ENCODE measurements at regions of chr1 and their contacts with region 1.

Region 1: GRCh38 chr1:236381565-236382158 is 12.4 kb upstream of the EDARADD start:
- DNase-seq: no peak
- H3K4me3 ChIP-seq: no peak overlapping the region
- CTCF ChIP-seq: no peak

Region 2: GRCh38 chr1:236345728-236346127 is 35.9 kb before region 1 on chr1:
- in situ Hi-C with region 1: loop called (anchors 5 kb)
- DNase-seq: no peak
- H3K4me3 ChIP-seq: no peak overlapping the region
- CTCF ChIP-seq: peak; percentile 12

Region 3: DNA sequence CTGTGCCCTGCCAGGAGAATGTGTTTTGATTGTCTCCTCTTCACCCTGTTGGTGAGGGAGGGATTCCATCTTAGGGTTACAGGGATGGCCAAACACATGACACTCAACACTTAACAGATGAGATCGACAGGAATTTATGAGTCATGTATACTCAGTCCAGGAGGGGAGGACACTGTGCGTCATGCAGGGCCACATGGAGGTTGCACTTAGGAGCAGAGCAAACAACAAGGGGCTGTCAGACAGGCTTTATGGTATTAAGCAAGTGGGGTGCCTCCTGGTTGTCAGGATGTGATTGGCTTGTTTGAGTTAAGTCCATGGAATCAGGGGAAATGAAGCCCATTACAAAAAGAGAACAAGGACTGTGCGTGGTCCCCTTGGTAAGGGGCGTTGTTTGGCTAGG is 39.4 kb after region 1 on chr1:
- in situ Hi-C with region 1: no loop called
- DNase-seq: no peak
- H3K4me3 ChIP-seq: no peak overlapping the region
- CTCF ChIP-seq: no peak

Region 4: GRCh38 chr1:236433819-236434315 is 52.2 kb after region 1 on chr1:
- in situ Hi-C with region 1: no loop called
- DNase-seq: no peak
- H3K4me3 ChIP-seq: no peak overlapping the region
- CTCF ChIP-seq: no peak

Measured in astrocyte of the cerebellum (primary cell).